Activated T-helper 1 cell treated with anti-CD3 and anti-CD28 coated beads, Interleukin-12 subunit alpha, Interleukin-12 subunit beta, Interleukin-2, Interleukin-4 antibody, amounts not matched to agents 30 ng/mL and 10 ng/mL and 1 ng/mL, durations not matched to agents 14 hours and 24 hours and 36 hours (primary cell): ENCODE measurements at regions of chr16 and their contacts with region 1.

Region 1: GRCh38 chr16:81873843-81874752 is 95.0 kb downstream of the PLCG2 start:
- DNase-seq: peak; percentile 38
- H3K4me3 Mint-ChIP-seq: no peak overlapping the region
- H3K27ac Mint-ChIP-seq: no peak overlapping the region
- H3K4me1 Mint-ChIP-seq: peaks cover 8% of the 10 kb centered on the region
- H3K27me3 Mint-ChIP-seq: peaks cover 12% of the 10 kb centered on the region

Region 2: GRCh38 chr16:81481207-81481821 is 392.8 kb before region 1 on chr16:
- intact Hi-C with region 1: no loop called
- DNase-seq: no peak
- H3K4me3 Mint-ChIP-seq: no peak overlapping the region
- H3K27ac Mint-ChIP-seq: no peak overlapping the region
- H3K4me1 Mint-ChIP-seq: peaks cover 62% of the 10 kb centered on the region
- H3K27me3 Mint-ChIP-seq: no peaks in the 10 kb centered on the region

Region 3: GRCh38 chr16:81831722-81832126 is 42.4 kb before region 1 on chr16:
- intact Hi-C with region 1: loop called (anchors 5 kb)
- DNase-seq: peak; percentile 21
- H3K4me3 Mint-ChIP-seq: peak overlapping the region; percentile 30
- H3K27ac Mint-ChIP-seq: no peak overlapping the region
- H3K4me1 Mint-ChIP-seq: peaks cover 30% of the 10 kb centered on the region
- H3K27me3 Mint-ChIP-seq: peaks cover 16% of the 10 kb centered on the region